ENCODE measurements at regions of chr12 and their contacts with region 1.

Region 1: DNA sequence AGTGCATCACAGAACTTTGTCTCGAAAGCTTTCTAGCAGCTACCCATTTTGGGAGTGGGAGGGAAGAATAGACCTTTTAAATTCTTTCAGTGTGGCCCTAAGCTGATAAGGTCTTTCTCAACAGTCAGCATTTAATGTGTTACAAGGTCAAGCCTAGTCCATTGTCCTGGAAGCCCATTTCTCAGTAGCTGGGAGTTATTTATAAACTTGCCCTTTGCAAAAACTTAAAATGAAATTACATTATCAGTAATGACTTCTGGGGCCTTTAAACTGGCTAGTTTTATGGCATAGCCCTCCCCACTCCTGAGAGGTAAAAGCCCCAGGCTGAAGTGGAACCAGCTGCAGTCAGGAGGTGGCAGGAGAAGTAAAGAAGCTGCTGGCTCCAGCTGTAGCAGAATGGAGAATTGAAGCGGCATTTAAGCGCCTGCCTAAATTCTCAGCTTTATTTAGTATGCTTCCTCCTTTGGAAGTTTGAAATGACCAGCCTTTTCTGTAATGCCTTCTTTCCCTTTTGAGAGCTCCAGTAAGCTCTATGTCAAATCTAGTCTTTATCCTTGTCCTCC is 12.4 kb downstream of the COPZ1 start:
- H3K4me3 ChIP-seq: no peak overlapping the region
- H3K27ac ChIP-seq: no peak overlapping the region
- H3K4me1 ChIP-seq: peaks cover 6% of the 10 kb centered on the region; the same call in 1 of the 2 replicates
- CTCF ChIP-seq: peak; percentile 33; the same call in 1 of the 2 replicates

Region 2: DNA sequence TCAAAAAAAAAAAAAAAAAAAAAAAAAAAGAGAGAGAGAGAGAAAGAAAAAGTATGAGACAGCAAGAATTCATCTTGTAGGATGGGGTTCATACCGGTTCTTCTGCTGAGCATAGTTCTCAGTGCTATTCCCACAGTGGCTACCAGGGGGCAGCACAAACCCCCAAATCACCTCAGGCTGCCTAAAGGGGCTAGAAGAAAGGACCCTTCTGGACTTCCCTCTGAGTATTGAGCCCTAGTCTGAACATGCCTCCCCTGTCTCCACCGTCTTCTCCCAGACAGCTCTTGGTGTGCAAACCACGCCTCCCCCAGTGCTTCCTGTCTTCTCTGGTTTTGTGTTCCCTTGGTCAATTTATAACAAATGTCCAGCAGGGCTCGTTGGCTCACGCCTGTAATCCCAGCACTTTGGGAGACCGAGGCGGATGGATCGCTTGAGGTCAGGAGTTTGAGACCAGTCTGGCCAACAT is 117.2 kb before region 1 on chr12:
- CTCF ChIA-PET with region 1: interaction called, 13 read pairs
- POLR2A ChIA-PET with region 1: no interaction called
- H3K4me3 ChIP-seq: no peak overlapping the region
- H3K27ac ChIP-seq: no peak overlapping the region
- H3K4me1 ChIP-seq: no peaks in the 10 kb centered on the region; the same call in 1 of the 2 replicates
- CTCF ChIP-seq: peak; percentile 84

Region 3: GRCh38 chr12:54294152-54294952 is 43.0 kb before region 1 on chr12:
- CTCF ChIA-PET with region 1: interaction called, 23 read pairs
- POLR2A ChIA-PET with region 1: no interaction called
- H3K4me3 ChIP-seq: no peak overlapping the region
- H3K27ac ChIP-seq: no peak overlapping the region
- H3K4me1 ChIP-seq: no peaks in the 10 kb centered on the region
- CTCF ChIP-seq: peak; percentile 69

Region 4: DNA sequence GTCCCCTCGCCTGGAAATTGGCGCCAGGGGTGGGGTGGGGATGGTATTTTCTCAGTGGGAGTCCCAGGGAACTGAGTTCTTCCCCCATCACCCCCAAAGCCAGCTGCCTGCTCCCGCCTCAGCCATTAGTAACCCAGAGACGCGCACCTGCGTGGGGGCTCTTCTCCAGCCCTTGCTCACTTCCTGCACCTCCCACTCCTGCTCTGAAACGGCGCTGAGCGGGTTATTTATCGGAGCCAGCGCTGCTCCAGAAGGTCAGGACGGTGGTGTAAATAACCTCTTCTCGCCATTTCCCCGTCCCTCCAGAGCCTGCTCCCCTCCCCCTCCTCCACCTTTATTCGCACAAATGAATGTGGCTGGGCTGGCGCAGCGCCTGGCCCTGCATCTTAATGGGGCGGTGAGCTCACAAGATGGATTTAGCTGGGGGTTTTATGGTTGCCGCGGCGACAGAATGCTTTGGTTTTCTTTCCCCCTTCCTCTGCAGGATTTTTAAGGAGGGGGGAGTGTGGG is 14.7 kb after region 1 on chr12:
- CTCF ChIA-PET with region 1: interaction called, 137 read pairs
- POLR2A ChIA-PET with region 1: interaction called, 5 read pairs
- H3K4me3 ChIP-seq: no peak overlapping the region
- H3K27ac ChIP-seq: peak overlapping the region; percentile 71
- H3K4me1 ChIP-seq: peaks cover 18% of the 10 kb centered on the region
- CTCF ChIP-seq: no peak

Region 5: DNA sequence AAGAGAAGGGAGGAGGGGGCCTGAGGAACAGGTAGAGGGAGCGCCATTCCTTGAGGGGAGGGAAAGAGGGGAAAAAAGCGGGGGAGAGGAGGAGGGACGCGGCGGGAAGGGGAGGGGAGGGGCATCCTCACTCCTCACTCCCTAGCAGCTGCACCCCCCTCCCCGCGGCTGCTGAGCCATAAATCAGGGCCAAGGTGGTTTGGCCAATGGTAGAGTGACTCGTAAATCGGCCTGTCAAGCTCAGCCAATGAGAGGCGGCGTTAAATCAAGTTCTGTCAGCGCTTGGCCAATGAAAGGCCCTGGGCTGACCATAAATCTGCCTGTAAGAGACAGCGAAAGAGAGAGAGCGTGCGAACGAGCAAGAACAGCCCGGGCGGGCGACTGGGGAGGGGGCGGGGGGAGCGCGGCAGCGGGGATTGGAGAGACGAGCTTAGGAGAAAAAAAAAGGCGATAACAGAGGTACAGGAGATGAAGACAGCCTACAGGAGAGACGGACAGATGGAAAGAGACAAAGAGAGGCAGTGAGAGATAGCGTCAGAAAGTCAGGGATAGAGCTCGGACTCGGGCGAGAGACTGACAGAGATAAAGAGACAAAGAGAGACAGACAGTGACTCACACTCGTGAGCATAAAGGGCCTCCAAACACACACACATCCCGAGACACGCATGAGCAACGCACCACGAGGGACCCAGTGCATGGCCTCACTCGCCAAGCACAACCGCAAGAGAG is 21.8 kb after region 1 on chr12:
- CTCF ChIA-PET with region 1: interaction called, 137 read pairs
- POLR2A ChIA-PET with region 1: interaction called, 15 read pairs
- H3K4me3 ChIP-seq: peak overlapping the region; percentile 62
- H3K27ac ChIP-seq: peak overlapping the region; percentile 80
- H3K4me1 ChIP-seq: peaks cover 12% of the 10 kb centered on the region
- CTCF ChIP-seq: no peak

Region 6: DNA sequence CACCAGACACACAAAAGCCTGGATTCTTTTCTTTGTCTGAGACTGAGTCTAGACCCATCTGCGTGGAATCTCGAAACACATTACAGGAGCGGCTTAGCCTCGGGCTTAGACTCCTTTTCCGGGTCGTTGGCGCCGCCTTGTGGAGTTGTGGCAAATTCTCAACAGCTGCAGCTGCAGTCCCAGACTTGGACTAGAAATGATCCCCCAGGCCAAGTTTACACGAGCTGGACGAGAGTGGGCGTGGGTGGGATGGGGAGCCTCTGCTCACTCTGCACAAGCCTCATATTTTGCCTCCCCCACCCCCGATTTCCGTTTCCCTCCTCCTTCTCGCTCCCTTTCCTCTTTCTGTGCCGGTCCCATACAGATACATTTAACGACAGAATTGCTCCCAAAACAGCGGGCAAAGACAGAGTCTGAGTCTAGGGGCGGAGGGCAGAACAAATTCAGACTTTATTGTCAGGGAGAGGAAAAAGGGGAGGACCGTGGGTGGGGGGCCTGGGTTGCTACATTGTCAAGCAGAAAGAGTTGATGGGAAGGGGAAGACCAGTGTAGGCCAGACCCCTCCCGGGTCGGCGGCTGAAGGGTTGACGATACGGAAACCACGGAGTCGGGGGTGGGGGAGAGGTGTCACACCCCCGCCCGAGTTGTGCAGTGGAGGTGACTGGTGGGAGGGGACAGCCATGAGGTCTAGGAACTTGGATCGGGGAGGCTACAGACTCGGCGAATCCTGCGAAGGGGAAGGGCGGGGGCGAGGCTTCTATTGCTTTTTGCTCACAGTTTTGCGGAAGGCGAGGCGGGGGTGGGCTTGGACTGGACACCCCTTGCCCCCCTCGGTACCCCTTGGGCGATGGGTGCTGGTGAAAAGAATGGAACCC is 31.6 kb after region 1 on chr12:
- CTCF ChIA-PET with region 1: interaction called, 137 read pairs
- POLR2A ChIA-PET with region 1: no interaction called
- H3K4me3 ChIP-seq: no peak overlapping the region
- H3K27ac ChIP-seq: no peak overlapping the region
- H3K4me1 ChIP-seq: peaks cover 10% of the 10 kb centered on the region
- CTCF ChIP-seq: peak; percentile 79

Region 7: GRCh38 chr12:54444206-54444605 is 106.8 kb after region 1 on chr12:
- CTCF ChIA-PET with region 1: no interaction called
- POLR2A ChIA-PET with region 1: no interaction called
- H3K4me3 ChIP-seq: no peak overlapping the region
- H3K27ac ChIP-seq: no peak overlapping the region
- H3K4me1 ChIP-seq: no peaks in the 10 kb centered on the region
- CTCF ChIP-seq: no peak

Region 8: GRCh38 chr12:54579696-54580333 is 242.5 kb after region 1 on chr12:
- CTCF ChIA-PET with region 1: no interaction called
- POLR2A ChIA-PET with region 1: no interaction called
- H3K4me3 ChIP-seq: no peak overlapping the region
- H3K27ac ChIP-seq: no peak overlapping the region
- H3K4me1 ChIP-seq: no peaks in the 10 kb centered on the region; the same call in 1 of the 2 replicates
- CTCF ChIP-seq: peak; percentile 97

Region 9: DNA sequence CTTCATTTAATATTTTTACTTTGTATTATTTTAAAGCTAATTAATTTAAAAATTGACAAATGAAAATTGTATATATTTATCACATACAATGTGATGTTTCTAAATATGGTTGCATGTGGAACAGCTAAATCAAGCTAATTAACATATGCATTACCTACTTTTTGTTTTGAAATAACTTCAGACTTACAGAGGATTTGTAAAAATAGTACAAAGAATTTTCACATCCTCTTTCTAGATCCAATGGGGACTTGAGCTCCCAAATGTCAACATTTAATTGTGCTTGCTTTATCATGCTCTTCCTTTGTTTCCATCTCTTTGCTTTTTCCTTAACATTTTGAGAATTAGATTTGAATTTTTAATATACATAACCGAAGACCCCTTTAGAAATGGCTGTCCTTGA is 304.2 kb after region 1 on chr12:
- CTCF ChIA-PET with region 1: no interaction called
- POLR2A ChIA-PET with region 1: no interaction called
- H3K4me3 ChIP-seq: no peak overlapping the region
- H3K27ac ChIP-seq: no peak overlapping the region
- H3K4me1 ChIP-seq: no peaks in the 10 kb centered on the region
- CTCF ChIP-seq: no peak